Naive thymus-derived CD4-positive, alpha-beta T cell (primary cell): ENCODE measurements at regions of chr6 and their contacts with region 1.

Region 1: GRCh38 chr6:108944707-108945680 is 96.8 kb downstream of the ARMC2 start:
- DNase-seq: no peak
- ATAC-seq: no peak
- H3K4me3 ChIP-seq: no peak overlapping the region
- H3K4me3 Mint-ChIP-seq: peak overlapping the region in 1 of 10 donors; percentile 17
- H3K27ac ChIP-seq: no peak overlapping the region
- H3K27ac Mint-ChIP-seq: peak overlapping the region in 6 of 9 donors; percentile 5 to 75 (median 66)
- H3K4me1 ChIP-seq: peaks cover 28 to 38% of the 10 kb centered on the region in 2 donors
- H3K4me1 Mint-ChIP-seq: peaks cover 22 to 82% (median 73%) of the 10 kb centered on the region in 7 donors
- H3K27me3 ChIP-seq: no peaks in the 10 kb centered on the region
- H3K27me3 Mint-ChIP-seq: peaks cover 0 to 5% (median 0%) of the 10 kb centered on the region in 5 donors

Region 2: GRCh38 chr6:108848116-108848868 is 96.7 kb before region 1 on chr6 and contains the start of gene ARMC2:
- CTCF ChIA-PET with region 1: no interaction called
- POLR2A ChIA-PET with region 1: interaction called, 3 read pairs
- intact Hi-C with region 1: loop called in 1 of 2 experiments (anchors 1 kb)
- DNase-seq: peak; percentile 72 to 95 (median 79)
- ATAC-seq: peak; percentile 94
- H3K4me3 ChIP-seq: peak within 1 kb of the TSS; percentile 90
- H3K4me3 Mint-ChIP-seq: peak within 1 kb of the TSS; percentile 75 to 93 (median 88)
- H3K27ac ChIP-seq: peak within 1 kb of the TSS; percentile 69
- H3K27ac Mint-ChIP-seq: peak within 1 kb of the TSS; percentile 72 to 93 (median 85)
- H3K4me1 ChIP-seq: peaks cover 6 to 13% of the 10 kb centered on the region in 2 donors
- H3K4me1 Mint-ChIP-seq: peaks cover 11 to 39% (median 29%) of the 10 kb centered on the region in 7 donors
- H3K27me3 ChIP-seq: no peaks in the 10 kb centered on the region
- H3K27me3 Mint-ChIP-seq: peaks cover 0 to 36% (median 0%) of the 10 kb centered on the region in 5 donors
- total RNA-seq, gene ARMC2: 6.2 to 12.7 (median 7.9) TPM

Region 3: DNA sequence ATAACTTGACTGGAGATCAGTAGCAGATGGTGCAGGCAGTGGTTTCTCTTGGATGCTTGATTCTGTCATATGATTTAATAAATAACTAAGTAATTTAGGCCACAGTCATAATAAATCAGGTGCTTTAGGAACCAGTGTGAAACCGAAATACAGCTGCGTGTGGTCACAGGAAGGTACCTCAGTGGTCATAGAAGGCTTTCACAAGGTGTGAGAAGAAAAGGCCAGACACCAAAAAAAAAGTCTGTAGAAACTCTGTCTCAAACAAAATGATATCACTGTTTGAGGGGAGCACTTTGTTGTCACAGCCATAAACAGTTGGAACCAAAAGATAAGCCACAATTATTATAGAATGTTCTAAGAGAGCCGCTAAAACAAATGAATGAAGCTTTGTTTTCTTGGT is 40.3 kb before region 1 on chr6:
- CTCF ChIA-PET with region 1: no interaction called
- POLR2A ChIA-PET with region 1: no interaction called
- intact Hi-C with region 1: loop called in 1 of 2 experiments (anchors 5 kb)
- DNase-seq: no peak
- ATAC-seq: peak; percentile 49
- H3K4me3 ChIP-seq: no peak overlapping the region
- H3K4me3 Mint-ChIP-seq: no peak overlapping the region
- H3K27ac ChIP-seq: no peak overlapping the region
- H3K27ac Mint-ChIP-seq: peak overlapping the region in 2 of 9 donors; percentile 4 to 40
- H3K4me1 ChIP-seq: peaks cover 9 to 22% of the 10 kb centered on the region in 2 donors
- H3K4me1 Mint-ChIP-seq: peaks cover 21 to 29% (median 25%) of the 10 kb centered on the region in 7 donors
- H3K27me3 ChIP-seq: no peaks in the 10 kb centered on the region
- H3K27me3 Mint-ChIP-seq: peaks cover 0 to 24% (median 0%) of the 10 kb centered on the region in 5 donors

Region 4: GRCh38 chr6:108921547-108922361 is 23.2 kb before region 1 on chr6:
- CTCF ChIA-PET with region 1: interaction called, 9 read pairs
- POLR2A ChIA-PET with region 1: no interaction called
- intact Hi-C with region 1: loop called in 1 of 2 experiments (anchors 2 kb)
- DNase-seq: no peak
- ATAC-seq: no peak
- H3K4me3 ChIP-seq: no peak overlapping the region
- H3K4me3 Mint-ChIP-seq: no peak overlapping the region
- H3K27ac ChIP-seq: no peak overlapping the region
- H3K27ac Mint-ChIP-seq: peak overlapping the region in 2 of 9 donors; percentile 27 to 62
- H3K4me1 ChIP-seq: peaks cover 14 to 16% of the 10 kb centered on the region in 2 donors
- H3K4me1 Mint-ChIP-seq: peaks cover 18 to 52% (median 44%) of the 10 kb centered on the region in 7 donors
- H3K27me3 ChIP-seq: no peaks in the 10 kb centered on the region
- H3K27me3 Mint-ChIP-seq: peaks cover 0 to 56% (median 0%) of the 10 kb centered on the region in 5 donors

Region 5: GRCh38 chr6:109059571-109060021 is 114.6 kb after region 1 on chr6:
- CTCF ChIA-PET with region 1: no interaction called
- POLR2A ChIA-PET with region 1: interaction called, 3 read pairs
- intact Hi-C with region 1: loop called in 1 of 2 experiments (anchors 5 kb)
- DNase-seq: peak in 7 of 9 donors; percentile 24 to 61 (median 40)
- ATAC-seq: peak; percentile 98
- H3K4me3 ChIP-seq: no peak overlapping the region
- H3K4me3 Mint-ChIP-seq: peak overlapping the region; percentile 4 to 68 (median 51)
- H3K27ac ChIP-seq: peak overlapping the region; percentile 33
- H3K27ac Mint-ChIP-seq: peak overlapping the region; percentile 40 to 92 (median 80)
- H3K4me1 ChIP-seq: peaks cover 13 to 19% of the 10 kb centered on the region in 2 donors
- H3K4me1 Mint-ChIP-seq: peaks cover 18 to 75% (median 59%) of the 10 kb centered on the region in 7 donors
- H3K27me3 ChIP-seq: no peaks in the 10 kb centered on the region
- H3K27me3 Mint-ChIP-seq: peaks cover 0 to 8% (median 0%) of the 10 kb centered on the region in 5 donors